Calu3 (cell line): ENCODE measurements at regions of chr15 and their contacts with region 1.

Region 1: GRCh38 chr15:55290528-55291057 is 980 bp upstream of the RAB27A start:
- DNase-seq: peak; percentile 89
- H3K4me3 Mint-ChIP-seq: peak overlapping the region; percentile 80
- H3K27ac Mint-ChIP-seq: peak overlapping the region; percentile 52
- H3K4me1 Mint-ChIP-seq: no peaks in the 10 kb centered on the region
- H3K27me3 Mint-ChIP-seq: no peaks in the 10 kb centered on the region
- CTCF ChIP-seq: peak; percentile 84

Region 2: DNA sequence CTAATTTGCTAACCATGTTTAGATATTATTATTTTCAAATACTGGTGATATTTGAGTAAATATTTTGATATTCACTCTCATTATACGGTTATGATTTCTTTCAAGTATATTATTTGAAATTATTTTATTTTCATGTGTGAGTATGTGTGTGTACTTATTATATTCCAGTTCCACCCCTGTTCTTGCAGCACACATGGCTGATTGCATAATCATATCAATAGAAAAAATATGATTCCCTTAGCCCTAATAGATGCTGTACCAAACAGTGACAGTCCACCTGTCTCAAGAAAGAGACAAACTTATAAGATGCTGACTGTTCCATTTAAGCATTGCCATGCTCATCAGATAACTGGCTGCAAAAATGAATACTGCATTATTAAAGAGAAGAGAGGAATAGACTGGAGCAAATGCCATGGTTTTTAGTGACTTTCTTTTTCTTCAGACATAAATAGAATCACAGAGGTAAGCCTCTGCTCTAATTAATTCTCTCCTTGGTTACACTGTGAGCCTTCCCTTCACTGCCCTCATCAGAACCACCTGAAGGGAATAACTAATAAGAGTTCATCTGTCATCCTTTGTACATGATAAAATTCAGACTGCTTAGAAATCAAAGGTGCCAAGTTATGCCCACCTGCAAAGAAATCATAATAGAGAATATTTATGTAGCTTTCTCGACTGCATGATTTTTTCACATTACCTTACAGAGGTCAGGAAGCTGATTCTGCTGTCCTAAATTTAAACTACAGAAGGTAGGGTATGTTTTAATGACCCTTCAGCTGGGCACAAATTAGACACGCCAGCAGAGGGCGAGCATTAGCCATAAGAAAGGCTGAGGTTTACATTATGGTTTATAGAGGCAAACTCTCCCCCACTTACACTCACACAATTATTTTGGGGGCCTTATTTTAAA is 1328.0 kb before region 1 on chr15:
- CTCF ChIA-PET with region 1: no interaction called
- intact Hi-C with region 1: loop called (anchors 10 kb)
- DNase-seq: peak; percentile 67
- H3K4me3 Mint-ChIP-seq: no peak overlapping the region
- H3K27ac Mint-ChIP-seq: no peak overlapping the region
- H3K4me1 Mint-ChIP-seq: no peaks in the 10 kb centered on the region
- H3K27me3 Mint-ChIP-seq: no peaks in the 10 kb centered on the region
- CTCF ChIP-seq: peak; percentile 73

Region 3: DNA sequence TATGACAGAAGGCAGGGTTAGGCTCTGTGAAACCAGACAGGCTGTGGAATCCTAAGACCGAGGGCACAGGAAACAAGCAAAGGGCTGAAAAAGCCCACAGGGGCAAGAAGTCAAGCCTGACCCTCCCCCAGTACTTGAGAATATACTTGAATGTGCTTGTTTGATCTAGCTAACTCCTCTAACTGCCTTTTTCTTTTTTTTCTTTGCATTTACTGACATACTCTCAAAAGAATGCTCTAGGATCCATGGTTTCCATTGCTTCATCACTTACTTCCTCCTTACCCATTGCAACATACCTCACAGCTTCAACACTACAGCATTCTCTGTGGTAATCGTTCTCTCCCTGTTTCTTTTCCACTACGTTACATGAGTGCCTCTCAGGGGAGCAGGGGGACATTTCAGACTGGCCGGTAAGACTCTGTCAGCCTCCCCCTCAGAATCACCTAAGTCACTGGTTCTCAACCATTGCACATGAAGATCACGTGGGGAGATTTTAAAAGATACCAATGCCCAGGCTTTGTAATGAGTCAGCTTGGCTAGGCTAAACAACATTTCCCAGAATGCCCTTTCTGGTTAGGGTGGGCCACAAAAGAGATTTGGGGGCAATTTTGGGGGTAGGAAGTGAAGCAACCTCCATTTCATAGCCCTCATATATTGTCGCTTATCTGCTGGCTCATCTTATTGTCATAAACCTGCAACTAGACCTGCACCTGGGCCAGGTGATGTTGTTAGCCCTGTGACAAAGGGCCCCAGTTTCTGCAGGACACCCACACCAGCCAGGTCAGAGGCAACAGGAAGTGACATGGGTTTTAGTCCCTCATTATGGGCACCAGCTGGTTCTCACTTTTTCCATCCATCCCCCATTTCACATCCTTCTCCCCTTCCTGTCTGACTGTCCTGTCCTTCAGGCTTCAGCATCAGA is 69.2 kb before region 1 on chr15:
- CTCF ChIA-PET with region 1: interaction called, 5 read pairs
- intact Hi-C with region 1: loop called (anchors 1 kb)
- DNase-seq: peak; percentile 45
- H3K4me3 Mint-ChIP-seq: peak overlapping the region; percentile 24
- H3K27ac Mint-ChIP-seq: peak overlapping the region; percentile 72
- H3K4me1 Mint-ChIP-seq: peaks cover 25% of the 10 kb centered on the region
- H3K27me3 Mint-ChIP-seq: no peaks in the 10 kb centered on the region
- CTCF ChIP-seq: no peak

Region 4: DNA sequence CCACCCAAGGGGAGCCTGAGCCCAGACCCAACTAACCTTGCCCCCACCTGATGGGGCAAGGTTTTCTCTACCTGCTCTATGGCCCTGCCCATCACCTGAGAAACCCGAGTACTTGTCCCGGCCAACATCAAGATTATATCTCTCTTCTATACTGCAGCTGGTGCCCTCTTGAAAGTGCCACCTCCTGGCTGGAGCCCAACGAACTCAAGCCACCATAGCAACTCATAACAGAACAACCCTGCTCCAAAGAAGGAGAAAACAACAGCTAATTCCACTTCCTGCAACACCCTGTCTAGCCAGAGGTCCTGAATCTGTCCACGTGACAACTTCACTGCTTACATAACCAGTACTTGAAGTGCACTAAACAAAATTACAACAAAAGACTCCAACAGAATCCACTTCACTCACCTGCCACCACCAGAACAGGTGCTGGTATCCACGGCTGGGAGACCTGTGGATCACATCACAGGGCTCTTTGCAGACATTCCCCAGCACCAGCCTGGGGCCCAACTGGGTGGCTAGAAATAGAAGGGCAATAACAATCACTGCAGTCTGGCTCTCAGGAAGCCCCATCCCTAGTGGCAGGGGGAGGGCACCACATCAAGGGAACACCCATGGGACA is 166.9 kb after region 1 on chr15:
- CTCF ChIA-PET with region 1: no interaction called
- intact Hi-C with region 1: no loop called
- DNase-seq: no peak
- H3K4me3 Mint-ChIP-seq: no peak overlapping the region
- H3K27ac Mint-ChIP-seq: no peak overlapping the region
- H3K4me1 Mint-ChIP-seq: peaks cover 14% of the 10 kb centered on the region
- H3K27me3 Mint-ChIP-seq: no peaks in the 10 kb centered on the region
- CTCF ChIP-seq: no peak